GM10248 (cell line): ENCODE measurements at regions of chr6 and their contacts with region 1.

Region 1: GRCh38 chr6:157893238-157893637 is 70.2 kb downstream of the SNX9 start:
- DNase-seq: no peak
- CTCF ChIP-seq: no peak

Region 2: GRCh38 chr6:157879873-157880254 is 13.4 kb before region 1 on chr6:
- CTCF ChIA-PET with region 1: interaction called, 37 read pairs
- POLR2A ChIA-PET with region 1: no interaction called
- DNase-seq: no peak
- CTCF ChIP-seq: no peak

Region 3: GRCh38 chr6:158488065-158488464 is 594.8 kb after region 1 on chr6:
- CTCF ChIA-PET with region 1: no interaction called
- POLR2A ChIA-PET with region 1: no interaction called
- DNase-seq: no peak
- CTCF ChIP-seq: no peak